GM10248 (cell line): ENCODE measurements at regions of chr12 and their contacts with region 1.

Region 1: DNA sequence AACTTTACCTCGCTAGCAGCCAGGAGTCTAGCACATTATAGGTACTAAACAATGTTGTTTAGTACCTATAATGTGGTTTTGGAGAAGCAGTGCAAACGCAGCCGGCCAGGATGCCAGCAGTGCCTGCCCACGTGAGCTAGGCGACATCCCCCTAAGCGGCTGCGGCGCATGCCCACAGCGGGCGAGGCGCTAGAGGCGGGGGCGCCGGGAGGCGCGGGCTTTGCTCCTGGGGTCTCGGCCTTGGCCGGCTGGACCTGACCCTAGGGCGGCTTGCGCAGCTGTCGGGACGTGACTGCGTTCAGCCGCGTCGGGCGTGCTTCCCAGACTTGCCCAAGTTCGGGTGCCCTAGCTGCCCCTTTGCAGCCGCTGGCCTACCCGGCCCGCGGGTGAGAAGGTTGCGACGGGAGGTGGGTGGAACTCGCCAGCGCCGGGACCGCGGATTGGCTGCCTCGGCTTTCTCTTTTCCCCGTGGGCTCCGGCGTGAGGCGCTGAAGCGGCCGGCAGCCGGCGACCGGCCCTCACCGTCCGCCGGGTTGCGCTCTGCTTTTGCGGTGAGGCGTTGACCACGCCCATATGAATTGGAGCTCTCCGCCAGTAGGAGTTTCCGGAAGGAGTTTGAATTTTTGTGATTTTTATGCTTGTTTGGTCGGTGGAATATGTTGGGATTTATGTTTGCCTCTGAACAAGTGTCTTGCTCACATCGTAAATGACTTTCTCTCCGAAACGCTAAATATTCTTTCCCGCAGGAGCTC is at the start of gene TMEM19:
- DNase-seq: peak; percentile 90
- CTCF ChIP-seq: peak; percentile 58

Region 2: DNA sequence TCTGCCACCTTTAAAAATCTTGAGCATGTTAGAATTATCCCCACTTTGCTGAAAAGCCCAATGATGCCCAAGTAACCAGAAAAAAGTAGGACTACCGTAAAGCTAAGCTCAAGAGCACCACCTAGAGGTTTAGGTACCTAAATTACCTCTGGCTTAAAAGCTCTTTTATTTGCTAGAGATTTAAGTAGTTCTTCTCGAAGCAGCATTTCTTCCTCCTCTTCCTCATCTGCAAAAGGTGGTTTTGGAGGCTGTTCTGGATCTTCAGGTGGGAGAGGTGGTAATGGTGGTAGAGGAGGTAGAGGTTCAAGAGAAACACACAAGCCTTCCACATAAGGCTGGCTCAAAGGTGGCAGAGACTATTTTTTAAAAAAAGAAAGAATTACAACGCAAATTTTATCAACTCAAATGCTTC is 49.4 kb before region 1 on chr12:
- CTCF ChIA-PET with region 1: interaction called, 18 read pairs
- POLR2A ChIA-PET with region 1: no interaction called
- DNase-seq: peak; percentile 50
- CTCF ChIP-seq: peak; percentile 74

Region 3: DNA sequence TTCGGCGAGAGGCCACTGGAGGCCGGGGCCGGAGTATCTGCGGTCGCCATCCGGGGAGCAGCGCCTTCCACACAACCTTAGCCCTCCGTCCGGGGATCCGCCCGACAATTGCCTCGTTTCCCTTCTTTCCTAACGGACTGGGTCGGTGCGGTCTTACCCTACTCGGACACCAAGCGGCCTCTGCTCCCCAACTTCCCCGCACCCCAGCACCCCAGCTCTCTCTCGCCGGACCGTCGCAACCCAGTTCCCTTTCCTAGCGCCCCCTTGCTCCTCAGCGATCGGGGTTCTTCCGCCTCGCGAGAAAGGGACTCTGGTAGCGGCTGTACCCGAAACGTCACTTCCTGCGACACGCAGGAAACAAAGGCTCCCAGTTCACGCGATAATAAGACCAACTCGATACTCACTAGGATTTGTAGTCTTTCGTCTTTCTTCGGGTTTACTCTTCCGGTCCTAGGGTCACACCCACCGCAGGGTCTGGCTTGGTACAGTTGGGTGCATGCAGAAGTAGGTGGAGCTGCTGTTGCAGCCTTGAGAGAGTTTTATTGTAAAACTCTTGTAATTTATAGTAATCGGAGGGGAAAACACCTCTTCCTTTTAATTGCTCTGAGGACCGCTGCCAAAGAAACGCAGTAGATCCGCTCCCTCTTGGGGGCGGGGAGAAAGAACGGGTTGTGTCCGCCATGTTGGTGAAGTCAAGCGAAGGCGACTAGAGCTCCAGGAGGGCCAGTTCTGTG is 22.4 kb before region 1 on chr12 and contains the start of gene ZFC3H1:
- CTCF ChIA-PET with region 1: interaction called, 31 read pairs
- POLR2A ChIA-PET with region 1: interaction called, 34 read pairs
- DNase-seq: peak; percentile 92
- CTCF ChIP-seq: peak; percentile 33

Region 4: GRCh38 chr12:71671816-71672215 is 14.3 kb before region 1 on chr12:
- CTCF ChIA-PET with region 1: interaction called, 31 read pairs
- POLR2A ChIA-PET with region 1: interaction called, 3 read pairs
- DNase-seq: no peak
- CTCF ChIP-seq: no peak

Region 5: GRCh38 chr12:71702590-71702989 is 16.5 kb after region 1 on chr12:
- CTCF ChIA-PET with region 1: interaction called, 20 read pairs
- POLR2A ChIA-PET with region 1: no interaction called
- DNase-seq: no peak
- CTCF ChIP-seq: no peak

Region 6: DNA sequence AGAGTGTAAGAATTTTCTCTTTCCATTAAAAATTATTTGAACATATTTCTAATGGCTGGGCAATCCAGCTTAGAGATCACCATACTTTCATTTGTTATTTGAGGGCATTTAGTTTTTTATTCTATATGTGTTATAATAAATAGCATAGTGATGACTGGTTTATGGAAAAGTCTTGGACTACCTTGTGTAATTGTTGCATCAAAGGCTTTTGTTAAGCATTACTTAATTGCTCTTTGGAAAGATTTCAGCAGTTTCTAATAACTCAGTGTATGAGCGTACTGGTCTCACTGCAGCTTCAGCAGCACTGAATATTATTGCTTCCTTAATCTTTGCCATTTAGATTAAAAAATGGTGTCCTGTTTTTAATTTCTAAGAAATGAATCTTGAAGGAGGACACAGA is 22.6 kb after region 1 on chr12:
- CTCF ChIA-PET with region 1: interaction called, 20 read pairs
- POLR2A ChIA-PET with region 1: no interaction called
- DNase-seq: no peak
- CTCF ChIP-seq: no peak

Region 7: GRCh38 chr12:71799106-71799505 is 113.0 kb after region 1 on chr12:
- CTCF ChIA-PET with region 1: no interaction called
- POLR2A ChIA-PET with region 1: no interaction called
- DNase-seq: no peak
- CTCF ChIP-seq: no peak